Mammary epithelial cell (primary cell): ENCODE measurements at regions of chrX and their contacts with region 1.

Region 1: DNA sequence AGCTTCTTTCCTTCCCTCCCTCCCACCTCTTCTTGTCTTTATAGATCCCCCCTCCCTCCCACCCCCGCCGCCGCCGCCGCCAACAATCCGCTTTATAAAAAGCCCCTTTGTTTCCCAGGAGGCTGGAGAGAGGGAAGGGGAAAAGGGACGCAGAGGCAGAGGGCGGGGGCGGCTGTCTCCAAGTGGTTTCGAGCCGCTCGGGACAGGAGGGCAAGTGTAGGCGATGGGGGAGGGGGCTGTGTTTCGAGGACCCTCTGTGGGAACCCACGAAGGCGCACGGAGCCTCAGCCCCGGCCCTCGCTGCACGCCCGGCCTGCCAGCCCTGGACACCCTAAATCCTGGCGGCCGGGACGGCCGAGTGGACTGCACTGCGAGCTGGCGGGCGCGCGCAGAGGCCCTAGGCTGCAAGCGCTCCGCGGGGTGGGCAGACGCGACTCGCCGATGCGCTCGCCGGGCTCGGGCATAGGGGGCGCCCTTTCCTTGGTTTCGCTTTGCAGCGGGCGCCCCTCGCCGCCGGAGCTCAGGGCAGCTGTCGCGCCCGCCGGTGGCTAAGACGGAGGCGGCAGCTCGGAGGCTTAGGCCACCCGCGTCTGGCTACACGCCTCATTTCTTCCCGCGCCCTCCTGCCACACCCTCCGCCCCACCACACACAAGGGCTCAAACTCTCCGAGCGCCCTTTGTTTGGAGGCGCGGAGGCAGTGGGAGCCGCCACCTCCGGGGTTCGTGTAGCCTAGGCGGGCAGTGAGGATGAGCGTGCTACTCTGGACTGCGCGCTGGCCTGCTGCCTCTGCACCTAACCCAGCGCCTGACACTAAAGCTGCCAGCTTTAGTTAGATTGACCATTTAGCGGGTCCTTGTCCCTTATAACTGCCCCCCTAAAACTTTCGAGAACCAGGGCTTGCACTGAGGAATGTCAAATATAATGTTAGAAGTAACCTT is 2.2 kb downstream of the MAMLD1 start:
- DNase-seq: peak; percentile 42
- H3K4me3 ChIP-seq: peak overlapping the region; percentile 46 to 60 (median 60)
- H3K27ac ChIP-seq: peak overlapping the region; percentile 32
- H3K4me1 ChIP-seq: peaks cover 20% of the 10 kb centered on the region
- H3K27me3 ChIP-seq: no peaks in the 10 kb centered on the region
- CTCF ChIP-seq: peak; percentile 26 to 60

Region 2: DNA sequence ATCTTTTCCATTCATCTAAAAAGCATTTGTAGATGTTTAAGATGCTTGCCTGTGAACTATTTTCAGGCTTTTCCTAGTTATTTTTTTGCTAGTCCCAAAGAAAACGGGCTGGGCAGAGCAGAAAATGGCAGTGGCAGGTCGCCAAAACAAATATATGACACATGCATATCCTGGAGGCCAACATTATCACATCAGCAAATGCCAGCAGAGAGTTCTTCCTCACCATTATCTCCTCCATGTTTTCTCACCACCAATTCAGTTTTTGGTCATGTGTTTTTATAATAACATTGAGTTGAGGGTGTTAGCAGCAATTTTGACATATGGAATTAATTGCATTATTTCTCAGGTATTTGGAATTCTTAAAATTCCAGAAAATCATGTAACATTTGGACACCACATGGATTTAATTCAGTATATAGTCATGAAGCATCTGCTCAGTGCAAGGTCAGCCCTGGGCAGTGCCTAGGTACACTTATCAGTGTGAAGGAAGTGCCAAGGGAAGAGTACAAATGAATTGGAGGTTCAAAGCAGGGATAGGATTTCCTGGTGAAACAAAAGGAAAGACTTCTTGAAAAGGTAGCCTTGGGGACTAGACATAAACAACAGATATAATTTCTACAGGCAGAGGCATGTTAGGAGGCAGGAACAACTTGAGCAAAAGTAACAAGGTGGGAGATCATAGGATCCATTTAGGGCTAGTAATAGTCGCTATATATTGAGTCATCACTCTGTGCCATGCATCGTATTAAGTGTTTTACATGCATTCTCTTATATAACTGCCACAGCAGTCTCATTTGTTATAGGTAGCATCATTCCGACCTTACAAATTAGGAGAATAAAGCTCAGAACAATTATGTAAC is 328.9 kb before region 1 on chrX:
- CTCF ChIA-PET with region 1: no interaction called
- dilution Hi-C with region 1: no loop called
- in situ Hi-C with region 1: no loop called
- intact Hi-C with region 1: loop called (anchors 5 kb)
- DNase-seq: peak; percentile 44
- H3K4me3 ChIP-seq: no peak overlapping the region
- H3K27ac ChIP-seq: peak overlapping the region; percentile 54
- H3K4me1 ChIP-seq: peaks cover 31% of the 10 kb centered on the region
- H3K27me3 ChIP-seq: no peaks in the 10 kb centered on the region
- CTCF ChIP-seq: no peak

Region 3: GRCh38 chrX:150200820-150201287 is 164.5 kb before region 1 on chrX:
- CTCF ChIA-PET with region 1: no interaction called
- dilution Hi-C with region 1: no loop called
- in situ Hi-C with region 1: no loop called
- intact Hi-C with region 1: loop called (anchors 5 kb)
- DNase-seq: peak; percentile 98
- H3K4me3 ChIP-seq: no peak overlapping the region
- H3K27ac ChIP-seq: no peak overlapping the region
- H3K4me1 ChIP-seq: peaks cover 27% of the 10 kb centered on the region
- H3K27me3 ChIP-seq: no peaks in the 10 kb centered on the region
- CTCF ChIP-seq: peak in 1 of 2 donors; percentile 2

Region 4: GRCh38 chrX:150587585-150588503 is 222.5 kb after region 1 on chrX:
- CTCF ChIA-PET with region 1: no interaction called
- dilution Hi-C with region 1: no loop called
- in situ Hi-C with region 1: no loop called
- intact Hi-C with region 1: loop called (anchors 2 kb)
- DNase-seq: no peak
- H3K4me3 ChIP-seq: no peak overlapping the region
- H3K27ac ChIP-seq: no peak overlapping the region
- H3K4me1 ChIP-seq: no peaks in the 10 kb centered on the region
- H3K27me3 ChIP-seq: no peaks in the 10 kb centered on the region
- CTCF ChIP-seq: peak; percentile 51 to 55

Region 5: GRCh38 chrX:150683536-150684146 is 318.3 kb after region 1 on chrX:
- CTCF ChIA-PET with region 1: no interaction called
- dilution Hi-C with region 1: no loop called
- in situ Hi-C with region 1: no loop called
- intact Hi-C with region 1: loop called (anchors 2 kb)
- DNase-seq: peak; percentile 27
- H3K4me3 ChIP-seq: no peak overlapping the region
- H3K27ac ChIP-seq: no peak overlapping the region
- H3K4me1 ChIP-seq: peaks cover 8% of the 10 kb centered on the region
- H3K27me3 ChIP-seq: no peaks in the 10 kb centered on the region
- CTCF ChIP-seq: peak; percentile 34 to 53